Heart right ventricle (tissue), 16 donors: ENCODE measurements at regions of chr3 and their contacts with region 1.

Region 1: DNA sequence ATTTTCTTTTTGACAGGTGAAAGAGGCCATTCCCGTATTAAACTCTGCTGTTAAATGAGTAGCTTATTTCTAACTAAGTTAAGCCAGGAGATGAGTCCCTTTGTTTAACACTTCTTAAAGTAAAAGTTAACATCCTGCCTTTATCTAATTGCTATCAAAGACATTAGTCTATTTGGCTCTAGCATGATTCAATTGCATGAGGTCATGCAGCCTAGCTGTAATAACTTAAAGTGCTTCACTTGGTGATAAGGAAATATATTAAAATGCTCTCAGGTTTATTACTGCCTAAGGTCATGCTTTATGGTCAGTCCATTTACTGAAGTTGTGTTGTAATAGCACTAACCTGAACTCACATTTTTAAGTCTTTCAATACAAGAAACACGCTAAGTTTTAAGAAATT is 82.3 kb upstream of the MLF1 start:
- DNase-seq: no peak
- ATAC-seq: no peak
- H3K4me3 ChIP-seq: no peak overlapping the region
- H3K27ac ChIP-seq: no peak overlapping the region
- H3K4me1 ChIP-seq: peaks cover 0 to 10% (median 4%) of the 10 kb centered on the region in 9 donors
- H3K27me3 ChIP-seq: no peaks in the 10 kb centered on the region
- CTCF ChIP-seq: no peak

Region 2: GRCh38 chr3:158368271-158368670 is 120.4 kb before region 1 on chr3:
- intact Hi-C with region 1: no loop called
- DNase-seq: no peak
- ATAC-seq: no peak
- H3K4me3 ChIP-seq: no peak overlapping the region
- H3K27ac ChIP-seq: no peak overlapping the region
- H3K4me1 ChIP-seq: no peaks in the 10 kb centered on the region
- H3K27me3 ChIP-seq: no peaks in the 10 kb centered on the region
- CTCF ChIP-seq: no peak

Region 3: DNA sequence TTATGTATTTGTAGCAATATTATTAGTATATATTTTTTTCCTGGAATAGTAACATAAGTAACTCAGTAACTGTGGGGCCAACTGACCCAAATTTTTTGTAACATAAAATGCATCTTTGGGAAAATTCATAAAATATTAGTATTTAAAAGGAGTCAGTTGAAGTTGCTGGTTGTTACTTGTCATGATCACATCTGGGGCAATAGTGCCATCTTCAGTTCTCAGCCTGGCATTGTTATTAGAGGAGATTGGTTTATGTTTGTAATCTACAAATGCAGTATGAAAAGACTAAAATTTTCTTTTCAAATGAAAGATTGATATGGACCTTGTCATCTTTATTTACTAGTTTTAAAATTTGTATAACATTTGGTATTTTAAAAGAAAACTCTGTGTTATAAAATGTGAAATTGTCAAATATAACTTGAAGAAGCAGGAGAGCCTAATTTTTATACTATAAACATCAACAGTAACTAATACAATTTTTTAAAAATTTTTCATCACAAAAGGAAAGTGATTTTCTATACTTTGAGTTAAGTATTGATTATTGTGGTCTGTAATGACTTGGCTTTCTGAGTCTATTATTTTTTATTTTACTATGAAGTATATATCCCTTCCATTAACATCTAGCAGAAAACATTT is 43.5 kb after region 1 on chr3:
- intact Hi-C with region 1: loop called in 1 of 10 experiments (anchors 5 kb)
- DNase-seq: no peak
- ATAC-seq: no peak
- H3K4me3 ChIP-seq: no peak overlapping the region
- H3K27ac ChIP-seq: no peak overlapping the region
- H3K4me1 ChIP-seq: no peaks in the 10 kb centered on the region
- H3K27me3 ChIP-seq: no peaks in the 10 kb centered on the region
- CTCF ChIP-seq: peak; percentile 30 to 69 (median 58)